Activated CD4-positive, alpha-beta memory T cell treated with anti-CD3 and anti-CD28 coated beads for 36 hours (primary cell): ENCODE measurements at regions of chr14 and their contacts with region 1.

Region 1: DNA sequence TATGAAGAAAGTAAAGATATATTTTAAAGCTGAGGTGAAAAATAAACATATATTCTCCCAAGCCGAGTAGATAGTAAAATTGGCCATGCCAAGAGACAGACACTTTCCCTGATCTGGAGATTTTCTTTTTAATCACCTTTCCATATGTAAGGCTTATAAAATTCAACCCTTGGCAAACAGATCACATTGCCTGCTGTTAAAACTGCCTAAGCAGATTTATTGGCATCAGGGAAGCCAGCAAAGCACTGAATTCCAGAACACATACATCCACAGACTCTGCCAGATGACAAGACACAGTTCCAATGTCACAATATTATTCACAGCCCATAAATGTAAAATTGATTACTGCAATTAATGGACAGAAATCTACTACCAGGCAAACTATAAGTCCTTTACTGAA is 78.2 kb upstream of the GARIN2 start:
- DNase-seq: no peak
- H3K4me3 Mint-ChIP-seq: no peak overlapping the region
- H3K27ac Mint-ChIP-seq: no peak overlapping the region
- H3K4me1 Mint-ChIP-seq: no peaks in the 10 kb centered on the region
- H3K27me3 Mint-ChIP-seq: no peaks in the 10 kb centered on the region

Region 2: GRCh38 chr14:66495218-66496098 is 615.6 kb before region 1 on chr14:
- CTCF ChIA-PET with region 1: no interaction called
- POLR2A ChIA-PET with region 1: no interaction called
- intact Hi-C with region 1: loop called (anchors 5 kb)
- DNase-seq: peak; percentile 41
- H3K4me3 Mint-ChIP-seq: no peak overlapping the region
- H3K27ac Mint-ChIP-seq: no peak overlapping the region
- H3K4me1 Mint-ChIP-seq: peaks cover 12% of the 10 kb centered on the region
- H3K27me3 Mint-ChIP-seq: peaks cover 1% of the 10 kb centered on the region